AG04450 (cell line): ENCODE measurements at regions of chr11 and their contacts with region 1.

Region 1: DNA sequence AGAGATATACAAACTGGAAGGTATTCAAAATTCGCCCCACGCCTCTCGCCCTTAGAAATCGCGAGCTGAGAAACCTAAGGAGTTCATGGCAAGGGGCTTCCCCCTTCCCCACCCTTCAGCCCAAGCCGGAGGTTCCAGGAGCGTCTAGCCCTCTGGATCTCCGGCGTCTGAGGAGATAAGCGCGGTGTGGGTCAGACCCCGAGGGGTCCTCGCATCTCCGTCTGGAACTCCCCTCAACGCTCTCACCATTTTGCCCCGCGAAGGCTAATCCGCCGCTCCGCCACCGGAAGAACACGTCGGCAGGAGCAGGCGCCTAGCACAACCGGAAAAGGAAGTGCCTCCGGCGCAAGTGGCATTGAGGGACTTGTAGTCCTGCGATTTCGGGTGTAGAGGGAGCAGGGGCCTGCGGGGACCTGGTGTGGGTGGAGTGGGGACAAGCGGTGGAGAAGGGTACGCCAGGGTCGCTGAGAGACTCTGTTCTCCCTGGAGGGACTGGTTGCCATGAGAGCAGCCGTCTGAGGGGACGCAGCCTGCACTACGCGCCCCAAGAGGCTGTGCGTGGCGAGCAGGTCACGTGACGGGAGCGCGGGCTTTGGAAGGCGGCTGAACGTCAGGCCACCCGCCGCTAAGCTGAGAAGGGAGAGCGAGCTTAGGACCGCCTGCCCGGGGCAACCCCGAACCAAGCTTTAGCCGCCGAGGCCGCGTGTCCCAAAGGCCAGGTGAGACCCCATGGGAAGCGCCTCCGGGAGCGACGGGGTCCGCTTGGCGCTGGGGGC is at the starts of genes FEN1 and TMEM258:
- DNase-seq: peak; percentile 88
- H3K4me3 ChIP-seq: peak within 1 kb of the TSS; percentile 96
- H3K27ac ChIP-seq: peak within 1 kb of the TSS; percentile 100
- H3K27me3 ChIP-seq: no peaks in the 10 kb centered on the region
- CTCF ChIP-seq: no peak
- polyA plus RNA-seq, gene FEN1: 7.1 and 8.4 TPM in 2 replicates
- polyA plus RNA-seq, gene TMEM258: 300 and 356 TPM in 2 replicates

Region 2: GRCh38 chr11:61805146-61805545 is 12.6 kb after region 1 on chr11:
- CTCF ChIA-PET with region 1: interaction called, 28 read pairs
- POLR2A ChIA-PET with region 1: interaction called, 3 read pairs
- DNase-seq: no peak
- H3K4me3 ChIP-seq: no peak overlapping the region
- H3K27ac ChIP-seq: no peak overlapping the region
- H3K27me3 ChIP-seq: no peaks in the 10 kb centered on the region
- CTCF ChIP-seq: no peak

Region 3: GRCh38 chr11:61827571-61828378 is 35.3 kb after region 1 on chr11 and contains the start of gene FADS2:
- CTCF ChIA-PET with region 1: interaction called, 5 read pairs
- POLR2A ChIA-PET with region 1: interaction called, 13 read pairs
- DNase-seq: peak; percentile 80
- H3K4me3 ChIP-seq: peak within 1 kb of the TSS; percentile 87
- H3K27ac ChIP-seq: peak within 1 kb of the TSS; percentile 65
- H3K27me3 ChIP-seq: no peaks in the 10 kb centered on the region
- CTCF ChIP-seq: 0 out of 2 replicates have a peak, but pooled peaks have one; percentile 3
- polyA plus RNA-seq, gene FADS2: 183 and 218 TPM in 2 replicates

Region 4: DNA sequence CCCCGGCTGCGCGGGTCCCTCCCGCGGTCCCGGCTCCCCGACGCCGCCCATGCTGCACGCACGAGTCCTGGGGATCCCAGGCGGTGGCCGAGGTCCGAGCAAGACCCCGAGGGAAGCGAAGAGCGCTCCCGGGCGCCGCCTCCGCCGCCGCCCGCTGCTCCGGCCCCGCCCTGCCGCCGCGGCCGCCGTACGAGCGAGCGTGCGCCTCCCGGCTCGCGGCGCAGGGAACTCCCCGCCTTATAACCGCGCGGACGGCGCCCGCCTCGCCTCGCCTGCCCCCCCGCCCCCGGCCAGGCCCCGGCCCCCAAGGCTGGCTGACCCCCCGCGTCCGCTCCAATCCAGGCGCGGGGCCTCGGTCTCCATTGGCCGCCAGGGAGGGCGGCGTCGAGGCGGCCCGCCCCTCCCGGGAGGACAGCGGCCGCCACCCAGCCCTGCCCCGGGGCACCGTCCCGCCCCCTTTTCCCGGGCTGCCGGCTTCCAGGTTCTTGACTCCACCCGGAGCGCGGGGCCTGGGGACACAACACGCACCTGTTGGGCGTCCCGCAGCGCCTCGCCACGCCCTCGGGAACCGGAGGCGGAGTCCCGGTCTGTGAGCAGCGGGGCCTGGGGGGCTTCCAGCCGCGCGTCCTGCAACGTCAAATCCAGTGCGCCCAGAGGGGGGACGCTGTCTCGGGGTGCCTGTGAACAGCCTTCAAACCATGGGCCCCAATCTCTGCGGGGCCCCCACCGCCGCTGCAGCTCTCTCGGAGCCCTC is 99.0 kb after region 1 on chr11 and contains the start of gene FADS3:
- CTCF ChIA-PET with region 1: interaction called, 45 read pairs
- POLR2A ChIA-PET with region 1: interaction called, 3 read pairs
- DNase-seq: no peak
- H3K4me3 ChIP-seq: peak within 1 kb of the TSS; percentile 84
- H3K27ac ChIP-seq: no peak within 1 kb of the TSS
- H3K27me3 ChIP-seq: no peaks in the 10 kb centered on the region
- CTCF ChIP-seq: no peak
- polyA plus RNA-seq, gene FADS3: 38.9 and 52.9 TPM in 2 replicates

Region 5: GRCh38 chr11:61947486-61948210 is 155.2 kb after region 1 on chr11:
- CTCF ChIA-PET with region 1: interaction called, 64 read pairs
- POLR2A ChIA-PET with region 1: interaction called, 14 read pairs
- DNase-seq: no peak
- H3K4me3 ChIP-seq: no peak overlapping the region
- H3K27ac ChIP-seq: no peak overlapping the region
- H3K27me3 ChIP-seq: peaks cover 13% of the 10 kb centered on the region
- CTCF ChIP-seq: peak; percentile 99